GM12878 (cell line): ENCODE measurements at regions of chr6 and their contacts with region 1.

Region 1: DNA sequence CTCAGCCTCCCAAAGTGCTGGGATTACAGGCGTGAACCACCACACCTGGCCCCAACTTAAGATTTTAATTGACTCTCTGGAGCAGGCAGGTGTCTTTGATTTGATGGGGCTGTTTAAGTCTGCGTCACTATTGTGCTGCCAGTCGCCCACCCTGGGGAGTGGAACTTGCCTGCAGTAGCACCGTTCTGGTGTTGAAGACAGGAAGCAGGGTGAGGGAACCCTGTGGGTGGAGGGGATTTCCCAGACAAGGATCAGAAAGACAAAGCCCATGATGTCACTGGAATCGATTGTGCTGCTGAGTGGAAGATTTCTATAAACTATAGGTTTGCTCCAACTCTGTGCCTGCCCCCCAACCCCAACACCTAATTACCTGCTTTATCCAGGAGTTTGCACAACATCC is 11.0 kb downstream of the ALDH8A1 start:
- DNase-seq: peak; percentile 13
- ATAC-seq: peak; percentile 85
- H3K4me3 ChIP-seq: no peak overlapping the region
- H3K27ac ChIP-seq: no peak overlapping the region
- H3K4me1 ChIP-seq: peaks cover 6% of the 10 kb centered on the region; the same call in 1 of the 2 replicates
- H3K27me3 ChIP-seq: no peaks in the 10 kb centered on the region
- CTCF ChIP-seq: no peak
- EP300 ChIP-seq: no peak
- POLR2A ChIP-seq: no peak
- RAD21 ChIP-seq: no peak

Region 2: GRCh38 chr6:134161036-134161435 is 777.9 kb before region 1 on chr6:
- CTCF ChIA-PET with region 1: interaction called, 44 read pairs
- POLR2A ChIA-PET with region 1: no interaction called
- RAD21 ChIA-PET with region 1: interaction called, 16 read pairs
- SMC1A ChIA-PET with region 1: interaction called, 20 read pairs
- in situ Hi-C with region 1: no loop called
- intact Hi-C with region 1: loop called (anchors 2 kb)
- DNase-seq: no peak
- ATAC-seq: no peak
- H3K4me3 ChIP-seq: no peak overlapping the region
- H3K27ac ChIP-seq: no peak overlapping the region
- H3K4me1 ChIP-seq: no peaks in the 10 kb centered on the region
- H3K27me3 ChIP-seq: no peaks in the 10 kb centered on the region
- CTCF ChIP-seq: no peak
- EP300 ChIP-seq: no peak
- POLR2A ChIP-seq: no peak
- RAD21 ChIP-seq: no peak

Region 3: DNA sequence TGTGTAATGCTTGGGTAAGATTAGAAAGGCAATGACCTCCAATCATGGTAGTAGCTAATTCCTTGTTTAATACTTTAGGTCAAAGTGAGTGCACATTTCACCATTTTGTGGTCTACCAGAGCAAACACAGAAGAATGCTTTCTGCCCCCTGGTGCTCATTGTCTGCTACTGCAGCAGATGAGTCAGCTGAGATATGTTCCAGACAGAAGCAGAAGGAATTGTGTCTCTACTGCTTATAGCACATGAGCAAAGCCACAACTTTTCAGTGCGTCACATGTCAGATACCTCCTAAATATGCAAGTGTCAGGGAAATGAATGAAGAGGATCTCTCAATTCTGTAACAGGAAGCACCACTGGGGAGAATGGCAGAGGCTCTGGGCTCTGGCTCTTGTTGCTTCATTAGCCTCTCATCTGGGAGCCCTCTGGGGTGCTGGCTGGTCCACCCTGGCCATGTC is 297.9 kb before region 1 on chr6:
- CTCF ChIA-PET with region 1: interaction called, 36 read pairs
- POLR2A ChIA-PET with region 1: no interaction called
- RAD21 ChIA-PET with region 1: interaction called, 10 read pairs
- SMC1A ChIA-PET with region 1: interaction called, 19 read pairs
- in situ Hi-C with region 1: no loop called
- intact Hi-C with region 1: loop called (anchors 5 kb)
- DNase-seq: peak; percentile 45
- ATAC-seq: peak; percentile 90
- H3K4me3 ChIP-seq: no peak overlapping the region
- H3K27ac ChIP-seq: no peak overlapping the region
- H3K4me1 ChIP-seq: no peaks in the 10 kb centered on the region
- H3K27me3 ChIP-seq: no peaks in the 10 kb centered on the region; a peak in 1 of 4 replicates
- CTCF ChIP-seq: peak; percentile 89 to 98 (median 93); a peak in 5 of 6 replicates
- EP300 ChIP-seq: no peak
- POLR2A ChIP-seq: no peak
- RAD21 ChIP-seq: peak; percentile 93

Region 4: DNA sequence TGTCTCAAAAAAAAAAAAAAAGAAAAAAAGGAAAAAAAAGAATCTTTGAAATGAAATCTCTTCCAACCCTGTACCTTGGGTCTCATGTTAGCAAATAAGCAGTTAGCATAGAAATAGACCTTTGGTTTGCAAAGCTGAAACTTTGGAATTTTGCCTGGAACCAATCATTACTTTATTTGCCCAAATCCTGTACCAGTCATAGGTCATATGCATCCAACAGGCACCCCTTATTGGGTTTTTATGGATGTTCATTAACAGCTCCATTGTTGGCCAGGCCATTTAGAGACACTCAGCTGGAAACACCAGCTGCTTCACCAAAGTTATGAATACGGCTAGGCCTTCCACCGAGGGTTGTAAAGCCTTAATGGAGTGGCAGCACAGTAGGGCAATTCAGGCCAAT is 42.0 kb before region 1 on chr6:
- CTCF ChIA-PET with region 1: interaction called, 11 read pairs
- POLR2A ChIA-PET with region 1: no interaction called
- RAD21 ChIA-PET with region 1: no interaction called
- SMC1A ChIA-PET with region 1: interaction called, 3 read pairs
- in situ Hi-C with region 1: no loop called
- intact Hi-C with region 1: no loop called
- DNase-seq: no peak
- ATAC-seq: no peak
- H3K4me3 ChIP-seq: no peak overlapping the region
- H3K27ac ChIP-seq: no peak overlapping the region
- H3K4me1 ChIP-seq: no peaks in the 10 kb centered on the region
- H3K27me3 ChIP-seq: no peaks in the 10 kb centered on the region; a peak in 1 of 4 replicates
- CTCF ChIP-seq: no peak
- EP300 ChIP-seq: no peak
- POLR2A ChIP-seq: no peak
- RAD21 ChIP-seq: no peak

Region 5: GRCh38 chr6:134954272-134955000 is 15.5 kb after region 1 on chr6:
- CTCF ChIA-PET with region 1: interaction called, 20 read pairs
- POLR2A ChIA-PET with region 1: no interaction called
- RAD21 ChIA-PET with region 1: interaction called, 7 read pairs
- SMC1A ChIA-PET with region 1: interaction called, 8 read pairs
- in situ Hi-C with region 1: no loop called
- intact Hi-C with region 1: no loop called
- DNase-seq: no peak
- ATAC-seq: no peak; the same call in 2 of the 3 replicates
- H3K4me3 ChIP-seq: no peak overlapping the region
- H3K27ac ChIP-seq: no peak overlapping the region
- H3K4me1 ChIP-seq: no peaks in the 10 kb centered on the region
- H3K27me3 ChIP-seq: no peaks in the 10 kb centered on the region
- CTCF ChIP-seq: no peak
- EP300 ChIP-seq: no peak
- POLR2A ChIP-seq: no peak
- RAD21 ChIP-seq: no peak

Region 6: DNA sequence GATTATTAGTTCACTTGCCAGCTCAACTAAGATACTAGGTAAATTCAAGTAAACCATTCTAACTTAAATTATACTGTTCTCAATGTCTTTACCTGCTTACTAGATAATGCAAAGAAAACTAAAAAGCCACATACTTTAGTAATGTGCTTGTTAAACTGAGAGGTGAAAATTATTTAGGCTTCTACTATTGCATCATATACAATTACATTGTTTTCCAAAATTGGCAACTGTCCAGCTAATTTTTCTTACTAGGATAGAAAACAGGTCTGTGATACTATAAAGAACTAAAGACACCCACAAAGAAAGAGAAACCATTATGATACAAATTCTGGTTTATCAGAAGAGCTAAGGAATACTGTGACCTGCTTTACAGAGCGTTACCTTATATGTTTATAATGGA is 56.6 kb after region 1 on chr6:
- CTCF ChIA-PET with region 1: interaction called, 26 read pairs
- POLR2A ChIA-PET with region 1: no interaction called
- RAD21 ChIA-PET with region 1: interaction called, 5 read pairs
- SMC1A ChIA-PET with region 1: interaction called, 8 read pairs
- in situ Hi-C with region 1: no loop called
- intact Hi-C with region 1: no loop called
- DNase-seq: no peak
- ATAC-seq: no peak
- H3K4me3 ChIP-seq: no peak overlapping the region
- H3K27ac ChIP-seq: no peak overlapping the region
- H3K4me1 ChIP-seq: no peaks in the 10 kb centered on the region; the same call in 1 of the 2 replicates
- H3K27me3 ChIP-seq: no peaks in the 10 kb centered on the region
- CTCF ChIP-seq: no peak
- EP300 ChIP-seq: no peak
- POLR2A ChIP-seq: no peak
- RAD21 ChIP-seq: no peak

Region 7: GRCh38 chr6:135438907-135439535 is 500.1 kb after region 1 on chr6:
- CTCF ChIA-PET with region 1: interaction called, 16 read pairs
- POLR2A ChIA-PET with region 1: no interaction called
- RAD21 ChIA-PET with region 1: interaction called, 8 read pairs
- SMC1A ChIA-PET with region 1: interaction called, 8 read pairs
- in situ Hi-C with region 1: no loop called
- intact Hi-C with region 1: no loop called
- DNase-seq: peak; percentile 17
- ATAC-seq: peak; percentile 83
- H3K4me3 ChIP-seq: no peak overlapping the region
- H3K27ac ChIP-seq: no peak overlapping the region
- H3K4me1 ChIP-seq: peaks cover 11% of the 10 kb centered on the region
- H3K27me3 ChIP-seq: no peaks in the 10 kb centered on the region
- CTCF ChIP-seq: peak; percentile 55 to 66 (median 58)
- EP300 ChIP-seq: no peak
- POLR2A ChIP-seq: no peak
- RAD21 ChIP-seq: peak; percentile 74